ENCODE measurements at regions of chr1 and their contacts with region 1.

Region 1: GRCh38 chr1:220873868-220874655 is 5.2 kb upstream of the HLX start:
- DNase-seq: peak; percentile 36
- ATAC-seq: no peak
- H3K4me3 Mint-ChIP-seq: no peak overlapping the region
- H3K27ac Mint-ChIP-seq: no peak overlapping the region
- H3K4me1 Mint-ChIP-seq: peaks cover 30% of the 10 kb centered on the region
- H3K27me3 Mint-ChIP-seq: peaks cover 2% of the 10 kb centered on the region
- CTCF ChIP-seq: no peak

Region 2: GRCh38 chr1:220810179-220810653 is 63.8 kb before region 1 on chr1:
- CTCF ChIA-PET with region 1: interaction called, 5 read pairs
- POLR2A ChIA-PET with region 1: no interaction called
- intact Hi-C with region 1: loop called (anchors 1 kb)
- DNase-seq: peak; percentile 54
- ATAC-seq: peak; percentile 99
- H3K4me3 Mint-ChIP-seq: peak overlapping the region; percentile 55
- H3K27ac Mint-ChIP-seq: no peak overlapping the region
- H3K4me1 Mint-ChIP-seq: peaks cover 2% of the 10 kb centered on the region
- H3K27me3 Mint-ChIP-seq: peaks cover 4% of the 10 kb centered on the region
- CTCF ChIP-seq: peak; percentile 96

Region 3: GRCh38 chr1:220908757-220909156 is 34.7 kb after region 1 on chr1:
- CTCF ChIA-PET with region 1: interaction called, 5 read pairs
- POLR2A ChIA-PET with region 1: interaction called, 3 read pairs
- intact Hi-C with region 1: loop called (anchors 1 kb)
- DNase-seq: no peak
- ATAC-seq: peak; percentile 52
- H3K4me3 Mint-ChIP-seq: no peak overlapping the region
- H3K27ac Mint-ChIP-seq: no peak overlapping the region
- H3K4me1 Mint-ChIP-seq: peaks cover 10% of the 10 kb centered on the region
- H3K27me3 Mint-ChIP-seq: peaks cover 9% of the 10 kb centered on the region
- CTCF ChIP-seq: no peak

Region 4: GRCh38 chr1:220983877-220984635 is 110.0 kb after region 1 on chr1:
- CTCF ChIA-PET with region 1: no interaction called
- POLR2A ChIA-PET with region 1: no interaction called
- intact Hi-C with region 1: no loop called
- DNase-seq: no peak
- ATAC-seq: no peak
- H3K4me3 Mint-ChIP-seq: no peak overlapping the region
- H3K27ac Mint-ChIP-seq: no peak overlapping the region
- H3K4me1 Mint-ChIP-seq: no peaks in the 10 kb centered on the region
- H3K27me3 Mint-ChIP-seq: peaks cover 7% of the 10 kb centered on the region
- CTCF ChIP-seq: no peak

Region 5: GRCh38 chr1:221022346-221022745 is 148.3 kb after region 1 on chr1:
- CTCF ChIA-PET with region 1: no interaction called
- POLR2A ChIA-PET with region 1: no interaction called
- intact Hi-C with region 1: no loop called
- DNase-seq: no peak
- ATAC-seq: no peak
- H3K4me3 Mint-ChIP-seq: no peak overlapping the region
- H3K27ac Mint-ChIP-seq: no peak overlapping the region
- H3K4me1 Mint-ChIP-seq: peaks cover 21% of the 10 kb centered on the region
- H3K27me3 Mint-ChIP-seq: no peaks in the 10 kb centered on the region
- CTCF ChIP-seq: no peak

Region 6: DNA sequence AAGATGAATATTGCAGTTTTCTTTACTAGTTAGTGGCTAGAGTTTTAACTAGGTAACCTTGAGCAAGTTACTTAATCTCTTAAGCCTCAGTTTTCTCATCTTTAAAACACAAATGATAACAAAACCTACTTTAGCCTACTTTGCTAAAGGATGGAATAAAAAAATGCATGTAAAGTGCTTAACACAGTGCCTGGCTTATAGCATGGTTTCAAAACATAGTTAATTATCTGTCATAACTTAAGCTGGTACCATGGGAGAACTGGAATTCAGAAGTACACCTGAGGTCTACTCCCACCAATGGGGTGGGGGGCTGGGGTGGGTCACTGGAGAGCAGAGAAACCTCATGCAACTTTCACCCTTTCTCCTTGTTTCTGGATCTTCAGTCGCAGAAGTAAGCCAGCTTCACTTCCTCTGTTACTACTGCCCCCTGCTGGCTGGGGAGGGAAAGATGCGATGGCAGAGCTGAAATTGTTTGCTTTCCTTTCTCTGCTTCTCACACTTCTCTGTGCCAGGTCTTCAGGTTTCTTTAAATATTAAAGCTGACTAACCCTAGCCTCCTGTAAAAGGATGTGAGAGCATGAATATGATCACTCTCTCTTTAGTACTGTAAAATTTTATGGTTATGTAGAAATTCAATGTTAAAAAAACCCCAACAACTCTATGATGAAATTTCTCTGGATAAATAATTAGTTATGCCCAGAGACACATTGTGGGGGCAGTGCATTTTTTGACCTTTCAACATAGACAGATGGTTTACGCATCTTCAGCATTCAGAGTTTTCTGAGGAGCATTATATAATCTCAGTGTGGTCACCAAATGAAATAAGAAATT is 329.4 kb after region 1 on chr1:
- CTCF ChIA-PET with region 1: interaction called, 175 read pairs
- POLR2A ChIA-PET with region 1: interaction called, 23 read pairs
- intact Hi-C with region 1: loop called (anchors 1 kb)
- DNase-seq: peak; percentile 59
- ATAC-seq: peak; percentile 45
- H3K4me3 Mint-ChIP-seq: no peak overlapping the region
- H3K27ac Mint-ChIP-seq: no peak overlapping the region
- H3K4me1 Mint-ChIP-seq: peaks cover 3% of the 10 kb centered on the region
- H3K27me3 Mint-ChIP-seq: peaks cover 7% of the 10 kb centered on the region
- CTCF ChIP-seq: no peak

Region 7: GRCh38 chr1:221487781-221488524 is 613.9 kb after region 1 on chr1:
- CTCF ChIA-PET with region 1: no interaction called
- POLR2A ChIA-PET with region 1: no interaction called
- intact Hi-C with region 1: no loop called
- DNase-seq: no peak
- ATAC-seq: no peak
- H3K4me3 Mint-ChIP-seq: no peak overlapping the region
- H3K27ac Mint-ChIP-seq: no peak overlapping the region
- H3K4me1 Mint-ChIP-seq: no peaks in the 10 kb centered on the region
- H3K27me3 Mint-ChIP-seq: peaks cover 2% of the 10 kb centered on the region
- CTCF ChIP-seq: no peak

Region 8: GRCh38 chr1:222171005-222171404 is 1296.9 kb after region 1 on chr1:
- CTCF ChIA-PET with region 1: no interaction called
- POLR2A ChIA-PET with region 1: no interaction called
- intact Hi-C with region 1: loop called (anchors 1 kb)
- DNase-seq: no peak
- ATAC-seq: peak; percentile 52
- H3K4me3 Mint-ChIP-seq: no peak overlapping the region
- H3K27ac Mint-ChIP-seq: no peak overlapping the region
- H3K4me1 Mint-ChIP-seq: no peaks in the 10 kb centered on the region
- H3K27me3 Mint-ChIP-seq: peaks cover 16% of the 10 kb centered on the region
- CTCF ChIP-seq: no peak